ENCODE measurements at regions of chr6 and their contacts with region 1.

Region 1: GRCh38 chr6:39892490-39893129 is 41.7 kb downstream of the MOCS1 start:
- DNase-seq: peak; percentile 69
- ATAC-seq: peak; percentile 75
- H3K4me3 ChIP-seq: no peak overlapping the region
- H3K27ac ChIP-seq: no peak overlapping the region
- H3K4me1 ChIP-seq: peaks cover 13% of the 10 kb centered on the region
- H3K27me3 ChIP-seq: no peaks in the 10 kb centered on the region
- CTCF ChIP-seq: peak; percentile 91
- POLR2A ChIP-seq: 0 out of 2 replicates have a peak, but pooled peaks have one; percentile 49
- RAD21 ChIP-seq: peak; percentile 97

Region 2: DNA sequence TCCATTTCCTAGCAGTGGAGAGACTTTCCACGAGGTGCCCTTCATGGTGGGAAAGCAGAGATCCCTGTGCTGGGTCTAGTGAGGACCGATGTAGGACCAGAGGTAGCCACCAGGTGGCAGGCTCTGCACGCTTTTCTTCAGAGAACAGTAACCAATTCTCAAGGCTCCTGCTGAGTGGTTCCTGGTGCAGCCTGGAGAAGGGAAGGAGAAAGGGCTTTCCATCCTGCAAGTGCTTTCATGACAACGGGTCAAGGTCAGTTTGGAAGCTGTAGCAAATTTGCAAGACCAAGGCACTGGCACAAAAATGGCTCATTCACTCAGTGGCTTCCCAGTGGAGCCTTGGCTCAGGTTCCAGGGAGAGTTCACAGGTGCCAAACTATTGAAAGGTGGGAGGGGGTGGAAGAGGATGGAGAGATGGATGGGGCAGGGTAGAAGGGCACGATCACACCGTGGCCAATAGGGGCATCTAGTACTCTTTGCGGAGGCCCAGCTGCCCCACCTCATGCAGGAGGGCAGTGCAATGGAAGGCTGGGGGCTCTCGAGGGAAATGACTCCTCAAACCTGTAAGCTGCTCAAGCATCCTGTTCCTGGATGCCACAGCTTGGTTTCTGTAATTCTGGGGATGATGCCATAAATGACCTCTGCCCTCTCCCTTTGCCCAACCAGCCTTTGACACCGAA is 544.6 kb before region 1 on chr6:
- CTCF ChIA-PET with region 1: no interaction called
- POLR2A ChIA-PET with region 1: no interaction called
- dilution Hi-C with region 1: no loop called
- in situ Hi-C with region 1: no loop called
- intact Hi-C with region 1: loop called (anchors 1 kb)
- DNase-seq: peak; percentile 51
- ATAC-seq: peak; percentile 99
- H3K4me3 ChIP-seq: no peak overlapping the region
- H3K27ac ChIP-seq: no peak overlapping the region
- H3K4me1 ChIP-seq: no peaks in the 10 kb centered on the region
- H3K27me3 ChIP-seq: no peaks in the 10 kb centered on the region; the same call in 1 of the 2 replicates
- CTCF ChIP-seq: peak; percentile 82
- POLR2A ChIP-seq: no peak
- RAD21 ChIP-seq: peak; percentile 82

Region 3: GRCh38 chr6:39377539-39377950 is 515.1 kb before region 1 on chr6:
- CTCF ChIA-PET with region 1: no interaction called
- POLR2A ChIA-PET with region 1: no interaction called
- dilution Hi-C with region 1: no loop called
- in situ Hi-C with region 1: no loop called
- intact Hi-C with region 1: loop called (anchors 1 kb)
- DNase-seq: peak; percentile 44
- ATAC-seq: peak; percentile 82
- H3K4me3 ChIP-seq: no peak overlapping the region
- H3K27ac ChIP-seq: no peak overlapping the region
- H3K4me1 ChIP-seq: no peaks in the 10 kb centered on the region
- H3K27me3 ChIP-seq: peaks cover 3% of the 10 kb centered on the region
- CTCF ChIP-seq: peak; percentile 58
- POLR2A ChIP-seq: no peak
- RAD21 ChIP-seq: peak; percentile 76

Region 4: DNA sequence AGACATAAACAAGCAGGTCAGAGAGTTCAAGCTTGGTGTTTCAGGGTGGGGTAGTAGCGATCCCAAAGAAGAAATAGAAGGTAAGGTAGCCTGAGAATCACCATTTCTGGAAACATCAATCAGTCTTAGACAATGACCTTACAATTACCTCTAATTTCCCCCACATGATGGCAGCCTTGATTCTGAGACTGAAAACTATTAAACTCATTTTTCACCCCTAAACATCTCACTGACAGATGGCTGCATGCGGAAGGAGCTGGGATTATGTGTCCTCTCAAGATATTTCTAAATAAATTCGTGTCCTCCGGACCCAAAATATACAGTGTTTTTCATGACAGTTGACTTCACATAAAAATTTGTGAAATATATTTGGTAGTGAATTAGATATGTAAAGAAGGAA is 228.4 kb before region 1 on chr6:
- CTCF ChIA-PET with region 1: no interaction called
- POLR2A ChIA-PET with region 1: no interaction called
- dilution Hi-C with region 1: no loop called
- in situ Hi-C with region 1: no loop called
- intact Hi-C with region 1: loop called (anchors 5 kb)
- DNase-seq: no peak
- ATAC-seq: no peak
- H3K4me3 ChIP-seq: no peak overlapping the region
- H3K27ac ChIP-seq: no peak overlapping the region
- H3K4me1 ChIP-seq: no peaks in the 10 kb centered on the region
- H3K27me3 ChIP-seq: no peaks in the 10 kb centered on the region
- CTCF ChIP-seq: no peak
- POLR2A ChIP-seq: no peak
- RAD21 ChIP-seq: no peak

Region 5: DNA sequence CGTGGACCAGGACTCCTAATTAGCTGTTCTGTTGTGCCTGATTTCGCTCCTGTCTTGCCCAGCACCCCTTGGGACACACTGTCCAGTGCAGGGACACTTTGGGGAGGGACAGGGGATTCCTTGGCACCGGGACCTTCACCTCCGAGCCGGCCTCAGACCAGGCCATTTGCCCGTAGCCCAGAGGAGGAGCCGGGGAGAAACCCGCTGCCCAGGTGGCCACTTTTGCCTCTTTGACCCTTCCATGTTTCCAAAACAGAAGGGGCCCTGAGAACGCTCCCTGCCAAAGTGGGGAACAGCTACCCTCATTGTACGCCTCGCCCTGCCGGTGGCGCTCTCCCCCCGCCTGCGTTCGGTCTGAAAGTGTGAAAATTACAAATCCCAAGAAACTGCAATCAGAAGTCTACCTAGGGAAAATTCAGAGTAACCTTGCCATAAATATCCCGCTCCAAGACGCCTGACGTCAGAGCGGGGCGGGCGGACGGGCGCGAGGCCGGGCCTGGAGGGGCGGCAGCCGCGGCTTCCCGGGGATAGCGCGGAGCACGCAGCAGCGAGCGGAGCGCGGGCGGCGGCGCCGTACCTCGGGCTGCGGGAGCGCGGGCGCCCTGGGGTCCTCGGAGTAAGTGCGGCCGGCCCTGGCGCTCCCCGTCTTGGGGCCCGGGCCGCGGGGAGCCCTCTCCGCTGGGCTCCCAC is 100.6 kb before region 1 on chr6 and contains the start of gene DAAM2:
- CTCF ChIA-PET with region 1: interaction called, 3 read pairs
- POLR2A ChIA-PET with region 1: no interaction called
- dilution Hi-C with region 1: no loop called
- in situ Hi-C with region 1: no loop called
- intact Hi-C with region 1: loop called (anchors 1 kb)
- DNase-seq: peak; percentile 41
- ATAC-seq: peak; percentile 88
- H3K4me3 ChIP-seq: peak within 1 kb of the TSS; percentile 49
- H3K27ac ChIP-seq: peak within 1 kb of the TSS; percentile 35
- H3K4me1 ChIP-seq: peaks cover 14% of the 10 kb centered on the region
- H3K27me3 ChIP-seq: no peaks in the 10 kb centered on the region
- CTCF ChIP-seq: peak; percentile 27; the same call in 1 of the 2 replicates
- POLR2A ChIP-seq: no peak
- RAD21 ChIP-seq: no peak
- total RNA-seq, gene DAAM2: 12.9 and 13.1 TPM in 2 replicates

Region 6: DNA sequence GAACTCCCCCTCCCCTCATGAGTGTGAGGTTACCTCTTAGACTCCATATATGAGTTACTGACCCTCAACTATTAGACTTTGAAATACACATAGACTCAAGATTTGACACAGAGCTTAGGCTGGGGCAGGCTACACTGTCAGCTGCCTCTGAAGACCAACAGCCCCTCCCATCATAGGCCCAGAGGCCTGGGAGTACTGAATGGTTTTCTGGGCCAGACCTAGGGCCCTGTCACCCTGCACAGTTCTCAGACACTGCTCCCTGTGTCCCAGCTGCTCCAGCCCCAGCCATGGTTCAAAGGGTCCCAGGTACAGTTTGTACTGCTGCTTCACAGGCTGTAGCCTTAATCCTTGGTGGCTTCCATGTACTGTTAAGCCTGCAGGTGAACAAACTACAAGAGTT is 173.8 kb after region 1 on chr6:
- CTCF ChIA-PET with region 1: no interaction called
- POLR2A ChIA-PET with region 1: no interaction called
- dilution Hi-C with region 1: no loop called
- in situ Hi-C with region 1: no loop called
- intact Hi-C with region 1: no loop called
- DNase-seq: no peak
- ATAC-seq: no peak
- H3K4me3 ChIP-seq: no peak overlapping the region
- H3K27ac ChIP-seq: no peak overlapping the region
- H3K4me1 ChIP-seq: no peaks in the 10 kb centered on the region
- H3K27me3 ChIP-seq: no peaks in the 10 kb centered on the region
- CTCF ChIP-seq: no peak
- POLR2A ChIP-seq: no peak
- RAD21 ChIP-seq: no peak

Region 7: GRCh38 chr6:40251637-40252300 is 359.2 kb after region 1 on chr6:
- CTCF ChIA-PET with region 1: no interaction called
- POLR2A ChIA-PET with region 1: no interaction called
- dilution Hi-C with region 1: no loop called
- in situ Hi-C with region 1: no loop called
- intact Hi-C with region 1: no loop called
- DNase-seq: no peak
- ATAC-seq: no peak
- H3K4me3 ChIP-seq: no peak overlapping the region
- H3K27ac ChIP-seq: no peak overlapping the region
- H3K4me1 ChIP-seq: no peaks in the 10 kb centered on the region
- H3K27me3 ChIP-seq: no peaks in the 10 kb centered on the region
- CTCF ChIP-seq: no peak
- POLR2A ChIP-seq: no peak
- RAD21 ChIP-seq: no peak